Activated naive CD4-positive, alpha-beta T cell treated with anti-CD3 and anti-CD28 coated beads for 36 hours (primary cell): ENCODE measurements at regions of chr2 and their contacts with region 1.

Region 1: GRCh38 chr2:99180755-99181623 is at the starts of genes MITD1 and MRPL30:
- DNase-seq: peak; percentile 94
- H3K4me3 Mint-ChIP-seq: peak within 1 kb of the TSS; percentile 95
- H3K27ac Mint-ChIP-seq: peak within 1 kb of the TSS; percentile 92
- H3K4me1 Mint-ChIP-seq: peaks cover 63% of the 10 kb centered on the region
- H3K27me3 Mint-ChIP-seq: no peaks in the 10 kb centered on the region
- total RNA-seq, gene MITD1: 61.4 to 64.1 TPM
- total RNA-seq, gene MRPL30: 40.2 to 43.3 TPM

Region 2: DNA sequence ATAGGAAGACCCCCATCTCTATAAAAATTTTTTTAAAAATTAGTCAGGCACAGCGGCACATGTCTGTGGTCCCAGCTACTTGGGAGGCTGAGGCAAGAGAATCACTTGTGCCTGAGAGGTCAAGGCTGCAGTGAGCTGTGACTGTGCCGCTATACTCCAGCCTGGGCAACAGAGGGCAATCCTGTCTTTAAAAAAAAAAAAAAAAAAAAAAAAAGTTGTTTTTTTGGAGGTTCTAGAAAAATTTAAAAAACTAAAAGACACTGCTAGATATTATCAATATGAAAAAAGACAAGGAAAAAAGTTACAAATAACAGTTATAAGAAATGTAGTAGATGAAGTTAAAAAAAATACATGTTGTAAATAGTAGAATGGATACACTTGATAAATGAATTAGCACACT is 95.6 kb before region 1 on chr2:
- CTCF ChIA-PET with region 1: interaction called, 3 read pairs
- intact Hi-C with region 1: loop called (anchors 1 kb)
- DNase-seq: peak; percentile 32
- H3K4me3 Mint-ChIP-seq: no peak overlapping the region
- H3K27ac Mint-ChIP-seq: no peak overlapping the region
- H3K4me1 Mint-ChIP-seq: peaks cover 5% of the 10 kb centered on the region
- H3K27me3 Mint-ChIP-seq: peaks cover 3% of the 10 kb centered on the region

Region 3: GRCh38 chr2:99141110-99142108 is 39.6 kb before region 1 on chr2 and contains the start of gene C2orf15:
- CTCF ChIA-PET with region 1: interaction called, 6 read pairs
- intact Hi-C with region 1: loop called (anchors 1 kb)
- DNase-seq: peak; percentile 96
- H3K4me3 Mint-ChIP-seq: peak within 1 kb of the TSS; percentile 93
- H3K27ac Mint-ChIP-seq: peak within 1 kb of the TSS; percentile 86
- H3K4me1 Mint-ChIP-seq: peaks cover 17% of the 10 kb centered on the region
- H3K27me3 Mint-ChIP-seq: no peaks in the 10 kb centered on the region
- total RNA-seq, gene C2orf15: 1.4 to 1.6 TPM

Region 4: DNA sequence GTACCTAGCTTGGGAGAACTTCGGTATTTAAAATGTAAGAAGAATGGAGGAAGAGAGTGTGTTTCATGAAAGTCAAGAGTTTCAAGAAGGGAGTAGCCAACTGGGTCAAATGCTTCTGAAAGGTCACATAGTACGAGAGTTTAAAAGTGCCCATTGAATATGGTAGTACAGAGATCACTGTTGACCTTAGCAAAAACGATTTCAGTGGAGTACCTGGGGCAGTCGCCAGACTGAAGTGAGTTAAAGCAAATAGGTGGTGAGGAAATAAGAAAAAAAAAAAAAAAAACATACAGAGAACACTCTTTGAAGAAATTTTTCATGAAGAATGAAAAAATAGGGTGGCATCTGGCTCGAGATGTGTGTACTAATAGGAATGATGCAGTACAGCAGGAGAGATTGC is 14.8 kb before region 1 on chr2:
- CTCF ChIA-PET with region 1: interaction called, 11 read pairs
- intact Hi-C with region 1: no loop called
- DNase-seq: no peak
- H3K4me3 Mint-ChIP-seq: no peak overlapping the region
- H3K27ac Mint-ChIP-seq: no peak overlapping the region
- H3K4me1 Mint-ChIP-seq: peaks cover 13% of the 10 kb centered on the region
- H3K27me3 Mint-ChIP-seq: no peaks in the 10 kb centered on the region